ENCODE measurements at regions of chr1 and their contacts with region 1.

Region 1: GRCh38 chr1:164983023-164983650 is 373.4 kb downstream of the LMX1A start:
- DNase-seq: no peak
- H3K4me3 ChIP-seq: no peak overlapping the region
- CTCF ChIP-seq: no peak

Region 2: GRCh38 chr1:165039996-165040395 is 56.9 kb after region 1 on chr1:
- in situ Hi-C with region 1: loop called (anchors 5 kb)
- DNase-seq: no peak
- H3K4me3 ChIP-seq: no peak overlapping the region
- CTCF ChIP-seq: no peak

Region 3: DNA sequence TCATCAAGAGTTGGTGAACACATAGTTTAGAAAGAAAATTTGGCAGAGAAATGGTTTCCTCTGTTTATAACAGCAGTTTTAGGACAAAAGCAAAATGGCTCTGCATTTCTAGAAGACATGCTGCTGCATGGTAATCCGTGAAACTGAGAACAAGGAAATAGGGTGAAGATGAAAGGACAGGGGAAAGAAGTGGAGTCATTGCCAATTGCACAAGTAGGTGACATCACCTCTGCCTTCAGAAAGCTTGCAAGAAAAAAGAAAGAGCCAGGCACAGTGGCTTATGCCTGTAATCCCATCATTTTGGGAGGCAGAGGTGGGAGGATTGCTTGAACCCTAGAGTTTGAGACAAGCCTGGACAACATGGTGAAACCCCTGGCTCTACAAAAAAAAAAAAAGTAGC is 155.8 kb after region 1 on chr1:
- in situ Hi-C with region 1: no loop called
- DNase-seq: no peak
- H3K4me3 ChIP-seq: no peak overlapping the region
- CTCF ChIP-seq: no peak

Measured in astrocyte of the cerebellum (primary cell).